Activated CD4-positive, alpha-beta memory T cell treated with anti-CD3 and anti-CD28 coated beads for 36 hours (primary cell): ENCODE measurements at regions of chr9 and their contacts with region 1.

Region 1: DNA sequence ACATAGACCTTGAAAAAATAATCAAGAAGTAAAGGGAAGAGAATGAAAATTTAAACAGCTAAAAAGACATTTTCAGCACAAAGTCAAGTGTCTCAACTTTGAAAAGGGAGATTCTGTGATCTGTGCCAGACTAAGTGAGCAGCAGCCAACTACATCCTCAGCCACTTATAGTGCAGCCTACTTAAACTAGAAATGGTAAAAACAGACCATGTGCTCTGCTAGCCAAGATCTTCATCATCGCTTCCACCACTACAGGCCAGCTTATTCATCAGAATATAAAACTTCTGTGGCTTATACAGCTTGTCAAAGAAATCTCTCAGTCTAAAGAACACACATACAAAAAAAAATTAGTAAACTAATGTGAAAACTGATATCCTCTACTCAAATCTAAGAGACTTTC is 63.5 kb downstream of the CEMIP2 start:
- DNase-seq: no peak
- H3K4me3 Mint-ChIP-seq: no peak overlapping the region
- H3K27ac Mint-ChIP-seq: peak overlapping the region; percentile 15
- H3K4me1 Mint-ChIP-seq: peaks cover 4% of the 10 kb centered on the region
- H3K27me3 Mint-ChIP-seq: no peaks in the 10 kb centered on the region

Region 2: DNA sequence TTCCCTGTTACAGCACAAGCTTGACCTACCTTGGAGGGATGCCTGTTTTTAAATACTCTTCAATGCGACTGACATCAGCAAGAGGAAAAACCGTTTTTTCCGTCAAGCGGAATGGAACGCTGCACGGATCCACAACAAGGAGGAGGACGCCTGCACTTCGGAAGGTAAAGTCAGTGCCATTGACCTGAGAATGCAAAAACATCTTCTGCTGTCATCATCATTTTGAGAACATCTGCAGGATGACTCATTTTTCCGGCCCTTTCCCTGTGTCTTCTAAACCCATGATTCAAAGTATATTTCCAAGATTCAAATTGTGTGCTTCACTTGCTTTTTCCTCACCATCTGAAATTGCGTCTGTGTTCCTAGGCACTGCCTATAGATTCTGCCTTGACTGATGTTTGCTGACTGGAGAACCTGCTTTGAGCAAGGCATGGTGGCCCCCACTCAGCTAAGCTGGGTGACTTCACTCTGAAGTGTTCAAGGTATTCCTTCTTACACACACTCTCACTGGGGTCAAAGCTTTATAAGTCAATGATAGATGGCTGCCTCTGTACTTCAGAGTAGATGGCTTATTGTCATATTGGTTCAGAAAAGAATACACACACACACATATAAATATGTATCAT is 14.6 kb before region 1 on chr9:
- CTCF ChIA-PET with region 1: interaction called, 4 read pairs
- POLR2A ChIA-PET with region 1: no interaction called
- intact Hi-C with region 1: loop called (anchors 2 kb)
- DNase-seq: no peak
- H3K4me3 Mint-ChIP-seq: no peak overlapping the region
- H3K27ac Mint-ChIP-seq: peak overlapping the region; percentile 63
- H3K4me1 Mint-ChIP-seq: peaks cover 32% of the 10 kb centered on the region
- H3K27me3 Mint-ChIP-seq: no peaks in the 10 kb centered on the region

Region 3: GRCh38 chr9:71748280-71748743 is 43.5 kb after region 1 on chr9:
- CTCF ChIA-PET with region 1: no interaction called
- POLR2A ChIA-PET with region 1: no interaction called
- intact Hi-C with region 1: no loop called
- DNase-seq: no peak
- H3K4me3 Mint-ChIP-seq: no peak overlapping the region
- H3K27ac Mint-ChIP-seq: peak overlapping the region; percentile 51
- H3K4me1 Mint-ChIP-seq: peaks cover 38% of the 10 kb centered on the region
- H3K27me3 Mint-ChIP-seq: no peaks in the 10 kb centered on the region

Region 4: DNA sequence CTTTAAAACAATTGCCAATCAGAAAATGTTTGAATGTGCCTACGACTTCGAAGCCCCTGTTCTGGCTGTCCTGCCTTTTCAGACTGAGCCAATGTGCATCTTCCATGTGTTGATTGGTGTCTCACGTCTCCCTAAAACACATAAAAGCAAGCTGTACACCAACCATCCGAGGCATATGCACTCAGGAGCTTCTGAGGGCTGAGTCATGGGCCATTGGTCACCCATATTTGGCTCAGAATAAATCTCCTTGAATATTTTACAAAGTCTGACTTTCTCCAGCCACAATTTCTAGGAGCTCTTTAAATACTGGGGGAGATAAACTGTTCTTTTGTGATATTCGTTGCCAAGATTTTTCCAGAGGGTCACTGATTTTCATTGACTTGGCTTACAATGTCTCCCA is 301.7 kb after region 1 on chr9:
- CTCF ChIA-PET with region 1: no interaction called
- POLR2A ChIA-PET with region 1: no interaction called
- intact Hi-C with region 1: no loop called
- DNase-seq: no peak
- H3K4me3 Mint-ChIP-seq: no peak overlapping the region
- H3K27ac Mint-ChIP-seq: no peak overlapping the region
- H3K4me1 Mint-ChIP-seq: no peaks in the 10 kb centered on the region
- H3K27me3 Mint-ChIP-seq: no peaks in the 10 kb centered on the region

Region 5: DNA sequence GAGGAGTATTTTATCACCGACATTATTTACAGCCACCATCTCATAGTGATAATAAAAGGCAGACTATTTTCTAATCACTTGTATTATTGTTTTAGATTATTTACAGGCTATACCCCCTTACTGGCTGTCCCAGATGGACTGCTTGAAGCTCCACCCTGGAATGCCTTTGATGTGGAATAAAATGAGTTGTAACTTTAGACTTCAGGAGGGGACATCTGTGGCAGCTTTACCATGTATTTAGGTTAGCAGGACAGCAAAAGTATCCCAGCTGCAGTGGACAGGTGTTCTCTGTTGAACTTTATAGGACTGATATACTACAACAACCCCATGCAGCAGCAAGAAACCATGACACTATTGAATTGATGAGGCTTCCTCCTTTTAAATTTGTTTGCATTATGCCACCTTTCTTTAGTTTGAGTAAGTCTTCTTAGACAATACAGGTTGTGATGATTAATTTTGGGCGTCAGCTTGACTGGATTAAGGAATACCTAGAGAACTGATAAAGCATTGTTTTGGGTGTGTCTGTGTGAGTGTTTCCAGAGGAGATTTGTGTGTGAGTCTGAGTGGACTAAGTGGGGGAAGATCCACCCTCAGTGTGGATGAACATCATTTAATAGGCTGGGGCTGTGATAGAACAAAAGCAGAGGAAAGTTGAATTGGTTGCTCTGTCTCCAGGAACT is 384.8 kb after region 1 on chr9:
- CTCF ChIA-PET with region 1: no interaction called
- POLR2A ChIA-PET with region 1: no interaction called
- intact Hi-C with region 1: no loop called
- DNase-seq: no peak
- H3K4me3 Mint-ChIP-seq: no peak overlapping the region
- H3K27ac Mint-ChIP-seq: no peak overlapping the region
- H3K4me1 Mint-ChIP-seq: no peaks in the 10 kb centered on the region
- H3K27me3 Mint-ChIP-seq: peaks cover 5% of the 10 kb centered on the region